Dendritic cell treated with granulocyte-macrophage colony-stimulating factor and Interleukin-4, amounts not matched to agents 40 ng/mL and 50 ng/mL, for 4 days (primary cell): ENCODE measurements at regions of chr17 and their contacts with region 1.

Region 1: GRCh38 chr17:65198653-65199382 is 61.6 kb downstream of the RGS9 start:
- H3K4me3 Mint-ChIP-seq: no peak overlapping the region
- H3K27ac Mint-ChIP-seq: no peak overlapping the region
- H3K4me1 Mint-ChIP-seq: peaks cover 35% of the 10 kb centered on the region
- H3K27me3 Mint-ChIP-seq: peaks cover 3% of the 10 kb centered on the region

Region 2: GRCh38 chr17:64968652-64969501 is 229.9 kb before region 1 on chr17:
- intact Hi-C with region 1: loop called (anchors 10 kb)
- H3K4me3 Mint-ChIP-seq: no peak overlapping the region
- H3K27ac Mint-ChIP-seq: no peak overlapping the region
- H3K4me1 Mint-ChIP-seq: peaks cover 12% of the 10 kb centered on the region
- H3K27me3 Mint-ChIP-seq: no peaks in the 10 kb centered on the region

Region 3: DNA sequence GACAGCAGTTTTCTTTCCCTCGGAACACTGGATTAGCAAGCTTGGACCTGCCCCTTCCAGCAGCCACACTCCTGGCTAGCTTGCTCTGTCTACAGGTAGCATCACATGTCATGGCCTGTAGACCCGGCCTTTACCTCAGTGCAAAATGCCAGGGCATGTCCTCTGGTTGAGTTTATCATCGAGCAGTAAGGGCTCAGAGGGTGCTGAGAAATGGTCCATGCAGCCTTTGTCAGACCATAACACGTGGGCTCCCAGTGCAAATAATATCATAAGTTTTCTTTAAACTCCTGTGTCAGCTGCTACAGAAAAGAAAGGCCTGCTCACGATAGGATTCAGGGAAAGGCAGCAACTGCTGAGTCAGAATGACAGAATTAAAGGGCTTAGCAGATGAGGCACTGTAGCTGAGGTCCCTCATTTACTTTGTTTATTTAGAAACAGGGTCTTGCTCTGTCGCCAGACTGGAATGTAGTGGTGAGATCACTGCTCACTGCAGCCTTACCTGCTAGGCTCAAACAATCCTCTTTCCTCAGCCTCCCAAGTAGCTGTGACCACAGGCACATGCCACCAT is 134.3 kb before region 1 on chr17:
- intact Hi-C with region 1: loop called (anchors 10 kb)
- H3K4me3 Mint-ChIP-seq: no peak overlapping the region
- H3K27ac Mint-ChIP-seq: no peak overlapping the region
- H3K4me1 Mint-ChIP-seq: peaks cover 34% of the 10 kb centered on the region
- H3K27me3 Mint-ChIP-seq: no peaks in the 10 kb centered on the region

Region 4: GRCh38 chr17:65137021-65137991 is 61.5 kb before region 1 on chr17 and contains the start of gene RGS9:
- intact Hi-C with region 1: loop called (anchors 5 kb)
- H3K4me3 Mint-ChIP-seq: peak within 1 kb of the TSS; percentile 61
- H3K27ac Mint-ChIP-seq: peak within 1 kb of the TSS; percentile 49
- H3K4me1 Mint-ChIP-seq: peaks cover 26% of the 10 kb centered on the region
- H3K27me3 Mint-ChIP-seq: peaks cover 62% of the 10 kb centered on the region